ENCODE measurements at regions of chr5 and their contacts with region 1.

Region 1: DNA sequence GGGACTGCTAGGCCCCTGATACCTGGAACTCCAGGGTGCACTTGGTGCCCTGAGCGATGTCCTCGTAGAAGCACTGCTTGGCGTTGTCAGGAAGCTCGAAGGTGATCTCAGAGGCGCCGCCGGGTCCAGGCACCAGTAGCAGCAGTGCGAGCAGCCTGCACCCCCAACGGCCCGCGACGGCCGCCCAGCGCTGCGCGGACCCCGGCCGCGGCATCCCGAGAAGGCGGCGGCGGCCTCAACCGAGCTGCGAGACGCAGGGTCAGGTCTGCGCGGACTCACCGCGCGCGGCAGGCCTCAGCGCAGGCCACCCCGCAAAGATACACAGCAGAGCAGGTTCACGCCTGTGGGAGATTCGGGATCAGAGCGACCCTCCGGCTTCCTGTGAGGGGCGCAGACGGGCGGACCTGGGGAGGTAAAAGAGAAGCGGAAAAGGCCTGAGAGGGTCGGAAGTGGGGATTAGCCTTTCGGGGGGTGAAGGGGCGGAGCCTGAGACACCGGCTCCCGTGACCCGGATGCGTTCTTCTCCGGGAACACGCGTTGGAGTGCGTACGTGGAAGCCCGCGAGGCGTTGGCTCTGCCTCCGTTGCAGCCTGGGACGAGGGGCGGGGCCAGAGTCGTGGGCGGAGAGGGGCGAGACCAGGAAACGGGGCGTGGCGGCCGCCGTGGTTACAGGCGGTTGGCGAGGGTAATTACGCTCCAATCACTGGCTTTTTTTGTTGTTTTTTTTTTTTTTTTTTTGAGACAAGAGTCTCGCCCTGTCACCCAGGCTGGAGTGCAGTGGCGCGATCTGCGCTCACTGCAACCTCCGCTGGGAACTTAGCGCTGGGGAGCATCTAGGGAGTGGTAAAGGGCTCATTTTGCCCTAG is at the start of gene TMED7:
- DNase-seq: peak; percentile 95
- ATAC-seq: peak; percentile 93
- H3K4me3 ChIP-seq: peak within 1 kb of the TSS; percentile 91
- H3K27ac ChIP-seq: peak within 1 kb of the TSS; percentile 86
- H3K4me1 ChIP-seq: peaks cover 5% of the 10 kb centered on the region; the same call in 1 of the 2 replicates
- H3K27me3 ChIP-seq: no peaks in the 10 kb centered on the region
- CTCF ChIP-seq: no peak
- EP300 ChIP-seq: peak in 1 of 2 experiments; percentile 48; a peak in 2 of 4 replicates
- POLR2A ChIP-seq: peak; percentile 86
- RAD21 ChIP-seq: no peak
- polyA plus RNA-seq, gene TMED7: 8.0 to 10.3 TPM

Region 2: GRCh38 chr5:115601701-115602590 is 23.9 kb before region 1 on chr5 and contains the start of gene TICAM2:
- CTCF ChIA-PET with region 1: interaction called, 26 read pairs
- POLR2A ChIA-PET with region 1: interaction called, 27 read pairs
- RAD21 ChIA-PET with region 1: interaction called, 12 read pairs
- SMC1A ChIA-PET with region 1: interaction called, 28 read pairs
- in situ Hi-C with region 1: no loop called
- intact Hi-C with region 1: loop called (anchors 2 kb)
- DNase-seq: peak; percentile 77
- ATAC-seq: peak; percentile 87
- H3K4me3 ChIP-seq: peak within 1 kb of the TSS; percentile 85
- H3K27ac ChIP-seq: peak within 1 kb of the TSS; percentile 94
- H3K4me1 ChIP-seq: peaks cover 22% of the 10 kb centered on the region
- H3K27me3 ChIP-seq: no peaks in the 10 kb centered on the region
- CTCF ChIP-seq: peak in 2 of 3 experiments; percentile 4 to 21; a peak in 1 of 6 replicates
- EP300 ChIP-seq: peak; percentile 66 to 76
- POLR2A ChIP-seq: peak; percentile 88
- RAD21 ChIP-seq: no peak
- polyA plus RNA-seq, gene TICAM2: 1.8 to 2.3 TPM

Region 3: GRCh38 chr5:115607935-115608334 is 17.9 kb before region 1 on chr5:
- CTCF ChIA-PET with region 1: interaction called, 27 read pairs
- POLR2A ChIA-PET with region 1: interaction called, 27 read pairs
- RAD21 ChIA-PET with region 1: interaction called, 9 read pairs
- SMC1A ChIA-PET with region 1: interaction called, 47 read pairs
- in situ Hi-C with region 1: no loop called
- intact Hi-C with region 1: loop called (anchors 2 kb)
- DNase-seq: no peak
- ATAC-seq: no peak
- H3K4me3 ChIP-seq: no peak overlapping the region
- H3K27ac ChIP-seq: no peak overlapping the region
- H3K4me1 ChIP-seq: peaks cover 3% of the 10 kb centered on the region
- H3K27me3 ChIP-seq: no peaks in the 10 kb centered on the region
- CTCF ChIP-seq: no peak
- EP300 ChIP-seq: no peak
- POLR2A ChIP-seq: no peak
- RAD21 ChIP-seq: no peak

Region 4: GRCh38 chr5:115770466-115770865 is 144.7 kb after region 1 on chr5:
- CTCF ChIA-PET with region 1: no interaction called
- POLR2A ChIA-PET with region 1: no interaction called
- RAD21 ChIA-PET with region 1: no interaction called
- SMC1A ChIA-PET with region 1: no interaction called
- in situ Hi-C with region 1: no loop called
- intact Hi-C with region 1: no loop called
- DNase-seq: no peak
- ATAC-seq: peak; percentile 73
- H3K4me3 ChIP-seq: no peak overlapping the region
- H3K27ac ChIP-seq: no peak overlapping the region
- H3K4me1 ChIP-seq: no peaks in the 10 kb centered on the region
- H3K27me3 ChIP-seq: no peaks in the 10 kb centered on the region
- CTCF ChIP-seq: peak; percentile 35 to 56 (median 44); a peak in 4 of 6 replicates
- EP300 ChIP-seq: no peak
- POLR2A ChIP-seq: no peak
- RAD21 ChIP-seq: 0 out of 2 replicates have a peak, but pooled peaks have one; percentile 15